ENCODE measurements at regions of chr6 and their contacts with region 1.

Region 1: GRCh38 chr6:131923356-131923755 is 27.8 kb downstream of the CCN2 start:
- DNase-seq: peak; percentile 41
- H3K4me3 ChIP-seq: no peak overlapping the region
- H3K27ac ChIP-seq: no peak overlapping the region
- H3K4me1 ChIP-seq: no peaks in the 10 kb centered on the region
- H3K27me3 ChIP-seq: no peaks in the 10 kb centered on the region
- CTCF ChIP-seq: peak; percentile 64 to 72
- POLR2A ChIP-seq: no peak

Region 2: GRCh38 chr6:131890091-131890490 is 33.3 kb before region 1 on chr6:
- CTCF ChIA-PET with region 1: no interaction called
- POLR2A ChIA-PET with region 1: no interaction called
- dilution Hi-C with region 1: no loop called
- intact Hi-C with region 1: no loop called
- DNase-seq: no peak
- H3K4me3 ChIP-seq: no peak overlapping the region
- H3K27ac ChIP-seq: no peak overlapping the region
- H3K4me1 ChIP-seq: no peaks in the 10 kb centered on the region
- H3K27me3 ChIP-seq: peaks cover 0 to 2% of the 10 kb centered on the region in 2 experiments
- CTCF ChIP-seq: no peak
- POLR2A ChIP-seq: no peak

Region 3: DNA sequence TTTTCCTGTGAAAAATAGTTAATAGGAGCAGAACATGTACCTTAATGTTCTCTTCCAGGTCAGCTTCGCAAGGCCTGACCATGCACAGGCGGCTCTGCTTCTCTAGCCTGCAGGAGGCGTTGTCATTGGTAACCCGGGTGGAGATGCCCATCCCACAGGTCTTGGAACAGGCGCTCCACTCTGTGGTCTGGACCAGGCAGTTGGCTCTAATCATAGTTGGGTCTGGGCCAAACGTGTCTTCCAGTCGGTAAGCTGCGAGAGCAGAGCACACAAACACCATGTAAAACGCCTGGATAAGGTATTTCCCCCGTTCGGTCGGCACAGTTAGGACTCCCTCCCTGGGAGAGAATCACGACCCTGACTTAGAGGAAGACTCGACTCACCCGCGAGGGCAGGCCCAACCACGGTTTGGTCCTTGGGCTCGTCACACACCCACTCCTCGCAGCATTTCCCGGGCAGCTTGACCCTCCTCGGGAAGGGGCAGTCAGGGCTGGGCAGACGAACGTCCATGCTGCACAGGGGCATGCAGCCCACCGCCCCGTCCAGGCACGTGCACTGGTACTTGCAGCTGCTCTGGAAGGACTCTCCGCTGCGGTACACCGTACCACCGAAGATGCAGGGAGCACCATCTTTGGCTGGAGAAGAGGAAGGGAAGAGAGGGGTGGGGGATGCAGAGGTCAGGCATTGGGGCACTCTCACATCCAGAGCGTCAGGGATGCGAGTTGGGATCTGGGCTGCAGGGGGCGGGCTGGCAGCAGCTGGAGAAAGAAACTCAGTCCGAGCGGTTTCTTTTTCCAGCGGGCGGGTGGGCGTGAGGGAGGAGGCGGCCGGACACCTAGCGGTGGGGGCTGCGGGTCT is 26.8 kb after region 1 on chr6:
- CTCF ChIA-PET with region 1: interaction called, 16 read pairs
- POLR2A ChIA-PET with region 1: interaction called, 3 read pairs
- dilution Hi-C with region 1: no loop called
- intact Hi-C with region 1: no loop called
- DNase-seq: peak; percentile 55
- H3K4me3 ChIP-seq: peak overlapping the region; percentile 10 to 93 (median 88)
- H3K27ac ChIP-seq: peak overlapping the region; percentile 69
- H3K4me1 ChIP-seq: peaks cover 35% of the 10 kb centered on the region
- H3K27me3 ChIP-seq: no peaks in the 10 kb centered on the region
- CTCF ChIP-seq: peak; percentile 5 to 37
- POLR2A ChIP-seq: peak; percentile 94

Region 4: GRCh38 chr6:132161283-132161682 is 237.9 kb after region 1 on chr6:
- CTCF ChIA-PET with region 1: interaction called, 16 read pairs
- POLR2A ChIA-PET with region 1: no interaction called
- dilution Hi-C with region 1: no loop called
- intact Hi-C with region 1: loop called (anchors 1 kb)
- DNase-seq: peak; percentile 70
- H3K4me3 ChIP-seq: no peak overlapping the region
- H3K27ac ChIP-seq: peak overlapping the region; percentile 5
- H3K4me1 ChIP-seq: peaks cover 7% of the 10 kb centered on the region
- H3K27me3 ChIP-seq: no peaks in the 10 kb centered on the region
- CTCF ChIP-seq: peak; percentile 34 to 41
- POLR2A ChIP-seq: no peak

Region 5: DNA sequence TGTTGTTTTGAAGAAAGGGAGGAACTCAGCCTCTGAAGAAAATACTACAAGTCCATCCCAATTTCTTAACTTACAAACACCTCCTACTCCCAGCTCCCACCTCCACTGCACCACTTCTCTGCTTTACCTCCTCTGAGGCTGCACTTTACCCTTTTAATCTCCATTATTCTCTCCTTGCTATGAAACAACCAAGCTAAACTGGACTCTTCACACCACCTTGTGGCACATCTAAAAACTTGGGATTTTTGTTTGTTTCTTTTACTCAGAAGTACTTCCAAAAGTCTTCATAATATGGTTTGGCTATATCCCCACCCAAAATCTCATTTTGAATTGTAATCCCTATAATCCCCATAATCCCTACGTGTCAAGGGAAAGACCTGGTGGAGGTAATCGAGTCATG is 335.7 kb after region 1 on chr6:
- CTCF ChIA-PET with region 1: interaction called, 168 read pairs
- POLR2A ChIA-PET with region 1: no interaction called
- dilution Hi-C with region 1: no loop called
- intact Hi-C with region 1: loop called (anchors 1 kb)
- DNase-seq: peak; percentile 60
- H3K4me3 ChIP-seq: no peak overlapping the region
- H3K27ac ChIP-seq: no peak overlapping the region
- H3K4me1 ChIP-seq: no peaks in the 10 kb centered on the region
- H3K27me3 ChIP-seq: no peaks in the 10 kb centered on the region
- CTCF ChIP-seq: peak; percentile 35 to 36
- POLR2A ChIP-seq: no peak

Region 6: GRCh38 chr6:132289756-132290155 is 366.4 kb after region 1 on chr6:
- CTCF ChIA-PET with region 1: interaction called, 15 read pairs
- POLR2A ChIA-PET with region 1: no interaction called
- dilution Hi-C with region 1: no loop called
- intact Hi-C with region 1: no loop called
- DNase-seq: no peak
- H3K4me3 ChIP-seq: no peak overlapping the region
- H3K27ac ChIP-seq: no peak overlapping the region
- H3K4me1 ChIP-seq: no peaks in the 10 kb centered on the region
- H3K27me3 ChIP-seq: peaks cover 0 to 4% of the 10 kb centered on the region in 2 experiments
- CTCF ChIP-seq: no peak
- POLR2A ChIP-seq: no peak

Region 7: DNA sequence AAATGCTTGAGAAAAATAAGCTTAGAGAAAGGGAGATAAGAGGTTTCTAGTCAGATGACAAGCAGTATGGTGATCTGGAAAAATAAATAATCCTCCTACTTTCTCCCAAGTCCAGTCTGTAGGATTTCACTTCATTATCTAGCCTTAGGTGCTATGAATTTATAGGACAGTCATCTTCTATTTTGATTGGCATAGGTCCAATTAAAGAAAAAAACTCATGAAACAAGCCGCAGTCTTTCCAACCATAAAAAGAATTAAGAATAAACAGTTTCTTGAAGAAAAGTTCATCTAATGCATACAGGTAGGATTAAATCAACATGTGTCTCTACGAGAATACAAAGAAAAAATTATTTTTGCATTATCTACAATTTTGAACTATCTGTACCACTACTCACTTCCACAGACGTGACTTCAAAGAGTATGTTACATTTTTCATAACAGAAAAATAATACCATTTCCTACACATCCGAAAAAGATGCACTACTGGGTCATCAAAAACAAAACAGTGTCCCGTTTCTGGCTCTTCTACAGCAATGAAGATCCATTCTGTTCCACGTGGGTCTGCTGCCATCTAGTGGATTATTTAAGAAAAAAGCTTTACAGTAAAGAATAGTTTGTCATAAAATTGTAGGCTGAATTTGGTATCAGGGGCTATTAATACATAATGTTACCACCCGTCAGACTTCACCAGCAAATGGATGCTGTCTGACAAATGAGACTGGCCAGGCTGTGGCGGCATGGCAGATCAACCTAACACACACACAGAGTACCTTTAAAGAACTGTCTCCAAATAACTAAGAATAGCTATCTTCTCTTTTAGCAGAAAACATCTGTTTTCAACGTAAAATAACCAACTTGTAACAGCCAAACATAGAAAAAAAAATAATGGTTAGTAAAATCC is 560.7 kb after region 1 on chr6:
- CTCF ChIA-PET with region 1: interaction called, 30 read pairs
- POLR2A ChIA-PET with region 1: no interaction called
- dilution Hi-C with region 1: no loop called
- intact Hi-C with region 1: no loop called
- DNase-seq: peak; percentile 71
- H3K4me3 ChIP-seq: no peak overlapping the region
- H3K27ac ChIP-seq: no peak overlapping the region
- H3K4me1 ChIP-seq: no peaks in the 10 kb centered on the region
- H3K27me3 ChIP-seq: no peaks in the 10 kb centered on the region
- CTCF ChIP-seq: peak; percentile 46 to 48
- POLR2A ChIP-seq: no peak

Measured in endothelial cell of umbilical vein (primary cell).